Endothelial cell of umbilical vein (primary cell): ENCODE measurements at regions of chr1 and their contacts with region 1.

Region 1: GRCh38 chr1:154669464-154670282 is 61.7 kb upstream of the ADAR start:
- DNase-seq: peak; percentile 88
- H3K4me3 ChIP-seq: no peak overlapping the region
- H3K27ac ChIP-seq: no peak overlapping the region
- H3K4me1 ChIP-seq: no peaks in the 10 kb centered on the region
- H3K27me3 ChIP-seq: no peaks in the 10 kb centered on the region
- CTCF ChIP-seq: peak; percentile 76 to 82
- POLR2A ChIP-seq: no peak

Region 2: GRCh38 chr1:154097873-154098272 is 571.8 kb before region 1 on chr1:
- CTCF ChIA-PET with region 1: no interaction called
- POLR2A ChIA-PET with region 1: no interaction called
- dilution Hi-C with region 1: no loop called
- intact Hi-C with region 1: no loop called
- DNase-seq: no peak
- H3K4me3 ChIP-seq: no peak overlapping the region
- H3K27ac ChIP-seq: no peak overlapping the region
- H3K4me1 ChIP-seq: no peaks in the 10 kb centered on the region
- H3K27me3 ChIP-seq: peaks cover 0 to 5% of the 10 kb centered on the region in 2 experiments
- CTCF ChIP-seq: no peak
- POLR2A ChIP-seq: no peak

Region 3: GRCh38 chr1:154682254-154682653 is 12.6 kb after region 1 on chr1:
- CTCF ChIA-PET with region 1: interaction called, 14 read pairs
- POLR2A ChIA-PET with region 1: no interaction called
- dilution Hi-C with region 1: no loop called
- intact Hi-C with region 1: no loop called
- DNase-seq: no peak
- H3K4me3 ChIP-seq: no peak overlapping the region
- H3K27ac ChIP-seq: no peak overlapping the region
- H3K4me1 ChIP-seq: no peaks in the 10 kb centered on the region
- H3K27me3 ChIP-seq: peaks cover 2 to 5% of the 10 kb centered on the region in 2 experiments
- CTCF ChIP-seq: no peak
- POLR2A ChIP-seq: no peak

Region 4: DNA sequence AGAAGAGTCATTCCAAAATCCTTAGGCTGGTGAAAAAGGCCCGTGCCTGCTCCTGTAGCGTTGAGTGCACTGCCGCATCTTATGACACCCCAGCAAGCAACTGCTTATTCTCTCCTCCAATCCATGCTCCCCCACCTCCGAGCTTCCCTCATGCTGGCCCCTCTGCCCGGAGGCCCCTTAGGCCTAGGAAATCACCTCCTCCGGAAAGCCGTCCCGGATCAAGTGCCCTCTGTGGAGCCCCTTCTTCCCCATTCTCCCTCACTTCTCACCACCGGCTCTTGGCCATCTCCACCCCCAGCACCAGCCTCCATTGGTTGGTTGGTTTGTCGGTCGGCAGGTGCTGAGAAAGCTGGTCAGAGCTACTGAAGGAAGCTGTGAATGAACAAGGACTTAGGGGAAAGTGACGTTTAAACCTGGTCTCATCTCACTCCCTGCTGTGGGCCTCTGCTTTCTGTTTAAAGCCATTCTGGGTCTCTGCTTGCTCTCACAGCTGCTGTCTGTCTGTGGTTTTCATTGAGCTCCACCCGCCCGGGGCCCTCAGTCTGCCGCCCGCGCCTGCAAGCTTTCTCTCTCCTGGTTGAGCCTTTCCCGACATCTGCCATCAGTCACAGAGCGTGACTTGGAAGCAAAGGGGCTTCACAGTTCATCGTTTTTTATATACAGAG is 78.2 kb after region 1 on chr1:
- CTCF ChIA-PET with region 1: interaction called, 26 read pairs
- POLR2A ChIA-PET with region 1: no interaction called
- dilution Hi-C with region 1: no loop called
- intact Hi-C with region 1: loop called (anchors 1 kb)
- DNase-seq: no peak
- H3K4me3 ChIP-seq: no peak overlapping the region
- H3K27ac ChIP-seq: no peak overlapping the region
- H3K4me1 ChIP-seq: no peaks in the 10 kb centered on the region
- H3K27me3 ChIP-seq: peaks cover 41 to 46% of the 10 kb centered on the region in 2 experiments
- CTCF ChIP-seq: no peak
- POLR2A ChIP-seq: no peak

Region 5: DNA sequence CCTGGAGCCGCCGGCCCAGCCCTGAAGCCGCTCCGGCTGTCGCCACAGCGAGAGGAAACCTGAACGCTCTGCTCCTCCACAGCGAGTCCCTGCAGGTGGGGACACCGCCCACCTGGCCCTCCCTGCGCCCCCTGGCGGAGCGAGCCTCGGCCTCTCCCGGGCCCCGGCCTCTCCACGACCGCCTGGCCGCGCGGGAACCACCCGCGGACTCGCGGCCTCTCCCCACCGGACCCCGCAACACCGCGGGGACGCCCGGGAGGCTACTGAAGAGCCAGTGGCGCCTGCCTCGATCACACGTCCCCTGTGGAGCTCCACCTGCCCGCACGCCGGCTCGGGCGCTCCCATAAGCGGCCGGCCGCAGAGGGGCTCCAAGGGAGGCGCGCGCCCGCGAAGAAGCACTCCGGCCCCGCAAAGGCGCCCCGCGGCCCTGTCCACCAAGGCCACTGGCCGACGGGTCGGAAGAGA is 90.8 kb after region 1 on chr1:
- CTCF ChIA-PET with region 1: interaction called, 44 read pairs
- POLR2A ChIA-PET with region 1: no interaction called
- dilution Hi-C with region 1: no loop called
- intact Hi-C with region 1: loop called (anchors 2 kb)
- DNase-seq: peak; percentile 19
- H3K4me3 ChIP-seq: peak overlapping the region in 1 of 3 experiments; percentile 29
- H3K27ac ChIP-seq: no peak overlapping the region
- H3K4me1 ChIP-seq: peaks cover 3% of the 10 kb centered on the region
- H3K27me3 ChIP-seq: peaks cover 8 to 34% of the 10 kb centered on the region in 2 experiments
- CTCF ChIP-seq: peak; percentile 76 to 86
- POLR2A ChIP-seq: no peak

Region 6: GRCh38 chr1:154870115-154870571 is 200.5 kb after region 1 on chr1 and contains the start of gene KCNN3:
- CTCF ChIA-PET with region 1: interaction called, 113 read pairs
- POLR2A ChIA-PET with region 1: no interaction called
- dilution Hi-C with region 1: no loop called
- intact Hi-C with region 1: no loop called
- DNase-seq: peak; percentile 93
- H3K4me3 ChIP-seq: peak within 1 kb of the TSS; percentile 13 to 44 (median 41)
- H3K27ac ChIP-seq: no peak within 1 kb of the TSS
- H3K4me1 ChIP-seq: peaks cover 26% of the 10 kb centered on the region
- H3K27me3 ChIP-seq: peaks cover 20 to 24% of the 10 kb centered on the region in 2 experiments
- CTCF ChIP-seq: no peak
- POLR2A ChIP-seq: no peak
- total RNA-seq, gene KCNN3: 0.85 and 1.1 TPM in 2 replicates

Region 7: DNA sequence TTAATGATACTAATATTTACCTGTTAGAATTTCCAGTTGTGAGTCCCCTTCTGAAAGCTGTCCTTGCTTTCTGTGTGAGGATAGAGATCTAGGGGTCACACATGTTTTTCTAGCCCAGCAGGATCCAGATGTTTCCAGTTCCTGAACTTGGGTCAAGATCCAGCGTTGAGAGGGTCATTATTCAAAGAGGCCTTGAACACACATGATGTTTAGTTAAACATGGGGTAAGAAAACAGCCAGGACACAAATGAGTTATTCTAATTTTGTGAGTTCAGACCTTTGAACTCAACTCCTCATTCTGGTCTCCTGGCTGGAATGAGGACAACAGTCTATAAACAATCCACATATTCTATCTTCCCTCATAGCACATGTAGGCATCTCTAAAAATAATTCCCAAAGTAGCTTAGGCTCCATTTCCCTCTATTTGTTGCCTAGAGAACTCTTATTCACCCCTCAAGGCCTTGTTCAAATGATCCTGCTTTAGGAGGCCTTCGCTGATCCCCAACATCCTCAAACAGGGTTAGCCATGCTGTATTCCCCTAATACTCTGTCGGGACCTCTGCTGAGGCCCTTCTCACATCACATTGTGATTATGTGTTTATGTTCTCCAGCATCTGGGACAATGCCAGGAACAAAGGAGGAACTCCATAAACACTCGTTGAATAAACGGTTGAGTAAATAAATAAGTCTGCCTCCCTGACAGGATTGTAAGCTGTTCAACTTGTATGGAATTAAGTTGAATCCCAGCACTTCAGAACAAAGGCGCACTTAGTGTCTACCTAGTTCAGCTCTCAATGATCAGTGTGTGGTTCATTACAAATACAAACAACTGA is 215.4 kb after region 1 on chr1:
- CTCF ChIA-PET with region 1: interaction called, 113 read pairs
- POLR2A ChIA-PET with region 1: no interaction called
- dilution Hi-C with region 1: no loop called
- intact Hi-C with region 1: no loop called
- DNase-seq: peak; percentile 92
- H3K4me3 ChIP-seq: no peak overlapping the region
- H3K27ac ChIP-seq: peak overlapping the region; percentile 32
- H3K4me1 ChIP-seq: peaks cover 18% of the 10 kb centered on the region
- H3K27me3 ChIP-seq: peaks cover 0 to 6% of the 10 kb centered on the region in 2 experiments
- CTCF ChIP-seq: no peak
- POLR2A ChIP-seq: peak; percentile 54

Region 8: GRCh38 chr1:154936555-154937084 is 266.9 kb after region 1 on chr1 and contains the start of gene PMVK:
- CTCF ChIA-PET with region 1: interaction called, 18 read pairs
- POLR2A ChIA-PET with region 1: no interaction called
- dilution Hi-C with region 1: no loop called
- intact Hi-C with region 1: no loop called
- DNase-seq: peak; percentile 94
- H3K4me3 ChIP-seq: peak within 1 kb of the TSS; percentile 26 to 79 (median 55)
- H3K27ac ChIP-seq: peak within 1 kb of the TSS; percentile 92
- H3K4me1 ChIP-seq: peaks cover 8% of the 10 kb centered on the region
- H3K27me3 ChIP-seq: no peaks in the 10 kb centered on the region
- CTCF ChIP-seq: peak in 1 of 2 donors; percentile 36
- POLR2A ChIP-seq: peak; percentile 73
- total RNA-seq, gene PMVK: 22.6 and 23.0 TPM in 2 replicates